BJ (cell line): ENCODE measurements at regions of chr12 and their contacts with region 1.

Region 1: DNA sequence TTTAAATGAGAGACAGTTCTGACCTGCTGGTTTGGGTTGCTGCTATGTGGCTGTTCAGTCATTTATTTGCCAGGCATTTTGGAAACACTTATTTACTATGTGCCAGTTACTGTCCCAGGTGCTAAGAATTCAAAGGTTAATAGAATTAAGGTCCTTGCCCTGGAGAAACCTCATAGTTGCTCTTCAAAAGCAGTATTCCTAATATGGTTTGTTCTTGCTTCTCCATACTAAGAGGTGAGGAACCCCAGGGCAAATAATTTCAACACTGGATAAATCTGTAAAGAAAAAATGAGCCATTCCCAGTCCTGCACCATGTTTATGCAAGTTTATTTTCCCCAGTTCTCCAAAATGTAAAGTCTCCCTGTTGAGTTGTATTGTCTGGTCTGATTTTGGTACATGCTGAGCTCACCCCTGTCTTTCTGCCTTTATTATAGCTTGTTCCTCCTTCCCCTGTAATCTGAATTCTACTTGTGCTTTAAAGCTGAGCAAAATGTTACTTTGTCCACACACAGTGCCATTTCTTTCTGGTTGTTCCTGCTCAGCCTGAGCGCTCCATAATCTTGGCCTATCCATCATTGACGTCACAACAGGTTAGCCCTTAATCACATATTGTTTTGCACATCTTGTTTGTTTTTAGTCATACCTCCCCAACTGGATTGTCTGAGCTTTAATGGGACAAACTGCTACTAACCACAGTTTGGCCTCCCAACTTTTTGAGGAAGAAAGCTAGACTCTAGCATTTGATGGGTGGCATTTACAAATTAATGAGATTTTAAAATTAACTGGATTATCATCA is 56.7 kb downstream of the SRGAP1 start:
- DNase-seq: no peak
- H3K4me3 ChIP-seq: no peak overlapping the region
- H3K27me3 ChIP-seq: no peaks in the 10 kb centered on the region
- CTCF ChIP-seq: no peak

Region 2: GRCh38 chr12:63912651-63913050 is 11.4 kb after region 1 on chr12:
- CTCF ChIA-PET with region 1: interaction called, 5 read pairs
- POLR2A ChIA-PET with region 1: interaction called, 12 read pairs
- DNase-seq: no peak
- H3K4me3 ChIP-seq: no peak overlapping the region
- H3K27me3 ChIP-seq: no peaks in the 10 kb centered on the region
- CTCF ChIP-seq: no peak